ENCODE measurements at regions of chr22 and their contacts with region 1.

Region 1: GRCh38 chr22:35131525-35132000 is 65.6 kb downstream of the ISX start:
- DNase-seq: no peak
- CTCF ChIP-seq: no peak

Region 2: GRCh38 chr22:34814260-34815025 is 317.1 kb before region 1 on chr22:
- in situ Hi-C with region 1: no loop called
- DNase-seq: no peak
- CTCF ChIP-seq: no peak

Region 3: GRCh38 chr22:34897126-34897525 is 234.4 kb before region 1 on chr22:
- in situ Hi-C with region 1: no loop called
- DNase-seq: no peak
- CTCF ChIP-seq: no peak

Region 4: GRCh38 chr22:35051791-35052190 is 79.8 kb before region 1 on chr22:
- in situ Hi-C with region 1: loop called (anchors 5 kb)
- DNase-seq: no peak
- CTCF ChIP-seq: no peak